ENCODE measurements at regions of chrX and their contacts with region 1.

Region 1: DNA sequence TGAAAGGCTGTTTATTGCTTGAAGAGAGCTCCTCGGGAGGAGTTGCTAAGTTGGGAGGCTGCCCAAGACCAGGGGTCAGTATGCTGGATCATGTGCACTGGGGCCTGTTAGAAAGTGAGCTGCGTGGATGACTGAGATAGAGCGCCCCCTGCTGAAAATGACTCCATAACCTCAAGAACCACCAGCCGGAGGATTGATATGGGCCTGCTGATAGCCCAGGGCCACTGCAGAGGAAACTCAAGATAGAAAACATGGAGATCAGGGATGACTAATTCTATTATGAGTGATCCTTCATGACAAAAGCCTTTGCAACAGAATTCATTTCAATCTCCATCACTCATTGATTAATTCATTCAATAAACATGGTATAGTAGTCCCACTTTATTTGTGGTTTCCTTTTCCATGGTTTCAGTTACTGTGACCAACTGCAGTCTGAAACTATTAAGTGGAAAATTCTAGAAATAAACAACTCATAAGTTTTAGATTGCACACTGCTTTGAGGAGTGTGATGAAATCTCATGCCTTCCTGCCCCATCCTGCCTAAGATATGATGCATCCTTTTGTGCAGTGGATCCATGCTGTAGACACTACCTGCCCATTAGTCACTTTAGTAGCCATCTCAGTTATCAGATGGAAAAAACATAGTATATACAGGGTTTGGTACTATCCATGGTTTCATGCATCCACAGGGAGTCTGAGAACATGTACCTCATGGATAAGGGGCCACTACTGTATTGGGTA is 126.7 kb upstream of the MBNL3 start:
- DNase-seq: peak; percentile 43
- ATAC-seq: peak; percentile 86
- H3K4me3 Mint-ChIP-seq: no peak overlapping the region
- H3K27ac Mint-ChIP-seq: no peak overlapping the region
- H3K4me1 Mint-ChIP-seq: no peaks in the 10 kb centered on the region
- H3K27me3 Mint-ChIP-seq: peaks cover under 1% of the 10 kb centered on the region; the same call in 1 of the 2 replicates
- CTCF ChIP-seq: peak; percentile 39; the same call in 1 of the 2 replicates

Region 2: GRCh38 chrX:131841496-131842410 is 773.8 kb before region 1 on chrX:
- CTCF ChIA-PET with region 1: interaction called, 12 read pairs
- POLR2A ChIA-PET with region 1: no interaction called
- DNase-seq: peak; percentile 29
- ATAC-seq: peak; percentile 96
- H3K4me3 Mint-ChIP-seq: peak overlapping the region; percentile 44; the same call in 1 of the 2 replicates
- H3K27ac Mint-ChIP-seq: no peak overlapping the region
- H3K4me1 Mint-ChIP-seq: peaks cover 6% of the 10 kb centered on the region
- H3K27me3 Mint-ChIP-seq: no peaks in the 10 kb centered on the region
- CTCF ChIP-seq: no peak

Region 3: GRCh38 chrX:132219343-132219768 is 396.2 kb before region 1 on chrX and contains the start of gene RAP2C:
- CTCF ChIA-PET with region 1: interaction called, 13 read pairs
- POLR2A ChIA-PET with region 1: no interaction called
- DNase-seq: peak; percentile 66
- ATAC-seq: peak; percentile 69
- H3K4me3 Mint-ChIP-seq: peak within 1 kb of the TSS; percentile 76
- H3K27ac Mint-ChIP-seq: peak within 1 kb of the TSS; percentile 91
- H3K4me1 Mint-ChIP-seq: peaks cover 18% of the 10 kb centered on the region
- H3K27me3 Mint-ChIP-seq: no peaks in the 10 kb centered on the region
- CTCF ChIP-seq: no peak
- total RNA-seq, gene RAP2C: 20.5 to 25.2 TPM (median 25.0 TPM) in 3 replicates

Region 4: GRCh38 chrX:132226169-132226568 is 389.4 kb before region 1 on chrX:
- CTCF ChIA-PET with region 1: interaction called, 25 read pairs
- POLR2A ChIA-PET with region 1: no interaction called
- DNase-seq: no peak
- ATAC-seq: no peak
- H3K4me3 Mint-ChIP-seq: no peak overlapping the region
- H3K27ac Mint-ChIP-seq: no peak overlapping the region
- H3K4me1 Mint-ChIP-seq: peaks cover 8% of the 10 kb centered on the region; the same call in 1 of the 2 replicates
- H3K27me3 Mint-ChIP-seq: no peaks in the 10 kb centered on the region
- CTCF ChIP-seq: no peak

Region 5: GRCh38 chrX:132292793-132293192 is 322.8 kb before region 1 on chrX:
- CTCF ChIA-PET with region 1: interaction called, 33 read pairs
- POLR2A ChIA-PET with region 1: no interaction called
- DNase-seq: no peak
- ATAC-seq: peak; percentile 60
- H3K4me3 Mint-ChIP-seq: no peak overlapping the region
- H3K27ac Mint-ChIP-seq: no peak overlapping the region
- H3K4me1 Mint-ChIP-seq: no peaks in the 10 kb centered on the region
- H3K27me3 Mint-ChIP-seq: no peaks in the 10 kb centered on the region
- CTCF ChIP-seq: peak; percentile 19; the same call in 1 of the 2 replicates

Region 6: DNA sequence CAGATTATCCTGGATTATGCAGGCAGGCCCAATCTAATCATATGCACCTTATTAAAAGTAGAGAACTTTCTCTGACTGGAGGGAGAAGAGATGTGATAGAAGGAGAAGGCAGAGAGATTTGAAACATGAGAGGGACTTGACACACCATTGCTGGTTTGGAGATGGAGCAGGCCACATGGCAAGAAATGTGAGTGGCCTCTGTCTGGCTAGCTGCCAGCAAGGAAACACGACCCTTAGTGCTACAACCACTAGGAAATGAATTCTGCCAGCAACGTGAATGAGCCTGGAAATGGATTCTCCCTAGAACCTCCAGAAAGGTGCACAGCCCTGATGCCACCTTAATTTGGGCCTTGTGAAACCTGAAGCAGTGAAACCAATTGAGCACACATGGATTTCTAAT is 47.3 kb before region 1 on chrX:
- CTCF ChIA-PET with region 1: no interaction called
- POLR2A ChIA-PET with region 1: no interaction called
- DNase-seq: no peak
- ATAC-seq: no peak
- H3K4me3 Mint-ChIP-seq: no peak overlapping the region
- H3K27ac Mint-ChIP-seq: no peak overlapping the region
- H3K4me1 Mint-ChIP-seq: no peaks in the 10 kb centered on the region
- H3K27me3 Mint-ChIP-seq: no peaks in the 10 kb centered on the region
- CTCF ChIP-seq: no peak

Region 7: DNA sequence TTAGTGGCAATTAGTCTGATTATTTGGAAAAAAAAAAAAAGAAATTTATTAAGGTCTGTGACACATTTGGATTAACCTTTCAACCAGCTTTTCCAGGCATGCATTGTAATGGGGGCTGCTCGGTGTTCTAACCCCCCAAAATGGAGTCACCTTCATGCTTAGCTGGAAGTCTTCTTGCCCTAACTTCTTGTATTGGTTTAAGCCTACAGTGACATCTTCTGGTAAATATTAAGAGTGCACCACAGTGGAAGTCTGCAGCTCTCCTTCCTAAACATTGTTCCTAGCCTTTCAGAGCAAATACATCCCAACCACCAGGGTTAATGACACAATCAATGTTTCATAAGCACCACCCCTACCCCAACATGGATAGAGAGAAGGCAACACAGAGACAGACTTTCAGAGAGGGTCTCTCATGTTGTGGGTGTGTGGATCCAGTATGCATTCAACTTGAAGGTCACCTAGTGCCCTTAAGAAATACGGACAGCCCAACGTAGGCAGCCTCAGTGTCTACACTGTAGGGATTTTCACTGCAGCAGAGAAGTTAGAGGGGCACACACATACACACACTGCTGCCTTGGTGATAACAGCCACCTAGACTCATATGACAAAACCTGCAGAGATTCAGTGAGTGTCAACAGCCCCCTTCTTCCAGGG is 16.1 kb after region 1 on chrX:
- CTCF ChIA-PET with region 1: interaction called, 15 read pairs
- POLR2A ChIA-PET with region 1: no interaction called
- DNase-seq: no peak
- ATAC-seq: peak; percentile 60; the same call in 1 of the 2 replicates
- H3K4me3 Mint-ChIP-seq: no peak overlapping the region
- H3K27ac Mint-ChIP-seq: no peak overlapping the region
- H3K4me1 Mint-ChIP-seq: no peaks in the 10 kb centered on the region
- H3K27me3 Mint-ChIP-seq: no peaks in the 10 kb centered on the region; the same call in 1 of the 2 replicates
- CTCF ChIP-seq: no peak

Measured in WTC11 (cell line).